ENCODE measurements at regions of chr2 and their contacts with region 1.

Region 1: GRCh38 chr2:31333527-31334183 is 80.9 kb downstream of the XDH start:
- H3K4me3 ChIP-seq: no peak overlapping the region
- H3K27ac ChIP-seq: peak overlapping the region; percentile 7; the same call in 1 of the 2 replicates
- H3K4me1 ChIP-seq: peaks cover 16% of the 10 kb centered on the region
- CTCF ChIP-seq: peak; percentile 71; the same call in 1 of the 2 replicates

Region 2: DNA sequence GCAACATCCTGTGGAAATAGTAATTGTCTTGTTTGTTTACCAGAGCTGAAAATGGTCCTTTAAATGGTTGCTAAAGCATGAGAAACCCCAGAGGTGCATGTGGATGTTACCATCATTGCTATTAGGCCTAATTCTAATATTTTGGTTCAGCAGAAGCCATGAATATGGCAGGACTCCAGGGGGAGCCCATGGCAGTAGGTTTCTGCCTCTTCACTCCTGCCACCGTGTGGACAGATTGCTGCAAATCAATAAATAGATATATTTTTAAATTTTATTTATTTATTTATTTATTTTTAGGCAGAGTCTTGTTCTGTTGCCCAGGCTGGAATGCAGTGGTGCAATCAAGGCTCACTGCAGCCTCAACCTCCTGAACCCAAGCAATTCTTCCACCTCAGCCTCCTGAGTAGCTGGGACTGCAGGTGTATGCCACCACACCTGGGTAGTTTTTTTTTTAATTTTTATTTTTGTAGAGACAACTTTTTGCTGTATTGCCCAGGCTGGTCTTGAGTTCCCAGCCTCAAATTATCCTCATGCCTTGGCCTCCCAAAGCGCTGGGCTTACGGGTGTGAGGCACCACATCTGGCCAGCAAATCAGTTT is 471.5 kb before region 1 on chr2:
- CTCF ChIA-PET with region 1: interaction called, 35 read pairs
- POLR2A ChIA-PET with region 1: no interaction called
- H3K4me3 ChIP-seq: no peak overlapping the region
- H3K27ac ChIP-seq: no peak overlapping the region
- H3K4me1 ChIP-seq: no peaks in the 10 kb centered on the region; the same call in 1 of the 2 replicates
- CTCF ChIP-seq: no peak; the same call in 1 of the 2 replicates

Region 3: DNA sequence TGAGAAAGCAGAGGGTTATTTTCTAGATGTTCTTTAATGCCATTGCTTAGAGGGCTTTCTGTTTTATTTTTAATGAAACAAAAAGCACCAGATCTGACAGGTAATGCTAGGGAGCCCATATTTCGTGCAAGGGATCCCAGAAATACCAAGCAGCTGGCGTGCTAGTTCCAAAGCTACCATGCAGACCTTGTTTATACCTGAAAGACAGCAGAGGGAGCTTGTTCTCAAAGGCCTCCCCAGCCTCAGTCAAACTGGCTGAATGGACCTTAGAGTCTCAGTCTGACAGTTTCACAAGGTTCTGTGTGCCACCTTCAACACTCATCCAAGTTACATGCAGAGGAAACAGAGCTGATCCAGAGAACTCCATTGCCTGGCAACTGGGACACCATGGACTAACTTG is 244.0 kb before region 1 on chr2:
- CTCF ChIA-PET with region 1: no interaction called
- POLR2A ChIA-PET with region 1: no interaction called
- H3K4me3 ChIP-seq: no peak overlapping the region
- H3K27ac ChIP-seq: no peak overlapping the region
- H3K4me1 ChIP-seq: no peaks in the 10 kb centered on the region
- CTCF ChIP-seq: no peak

Region 4: DNA sequence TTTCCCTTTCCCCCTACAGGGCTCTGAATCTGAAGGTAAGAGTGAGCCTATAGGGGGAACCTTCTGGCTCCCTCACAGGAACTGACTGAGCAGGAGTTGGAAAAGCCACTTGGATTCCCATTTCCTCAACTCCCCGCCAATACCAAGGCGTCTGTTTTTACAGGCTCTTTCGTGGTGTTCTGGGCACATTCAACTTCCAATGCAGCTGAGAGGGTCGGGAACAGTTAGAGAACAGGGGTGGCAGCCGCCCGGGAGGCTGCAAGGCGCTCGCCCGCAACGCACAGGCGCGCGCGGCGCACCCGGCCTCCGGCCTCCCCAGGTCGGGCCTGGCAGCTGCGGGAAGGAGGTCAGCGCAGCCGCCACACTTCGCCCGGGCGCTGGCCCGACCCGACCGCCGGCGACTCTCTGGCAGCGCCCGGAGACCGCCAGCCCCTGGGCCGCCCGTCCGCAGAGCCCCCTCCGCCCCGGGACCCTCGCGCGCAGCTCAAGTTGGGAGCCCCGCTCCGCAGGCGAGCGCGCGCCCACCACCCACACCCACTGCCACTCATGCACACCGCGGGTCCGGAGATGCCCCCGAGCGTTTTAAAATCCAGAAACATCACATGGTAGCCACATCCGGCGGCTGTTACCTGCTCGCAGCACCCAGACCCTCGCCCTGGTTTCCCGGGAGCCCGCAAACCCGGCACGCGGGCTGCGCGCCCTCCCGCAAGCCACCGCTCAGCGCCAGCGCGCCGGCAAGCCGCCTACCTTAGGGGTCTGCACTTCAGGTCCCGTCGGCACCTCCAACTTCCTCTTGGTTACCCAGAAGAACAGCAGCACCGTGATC is 196.2 kb before region 1 on chr2:
- CTCF ChIA-PET with region 1: no interaction called
- POLR2A ChIA-PET with region 1: no interaction called
- H3K4me3 ChIP-seq: peak overlapping the region; percentile 48
- H3K27ac ChIP-seq: peak overlapping the region; percentile 61; the same call in 1 of the 2 replicates
- H3K4me1 ChIP-seq: no peaks in the 10 kb centered on the region
- CTCF ChIP-seq: no peak

Region 5: GRCh38 chr2:31170071-31170698 is 163.5 kb before region 1 on chr2:
- CTCF ChIA-PET with region 1: interaction called, 24 read pairs
- POLR2A ChIA-PET with region 1: no interaction called
- H3K4me3 ChIP-seq: no peak overlapping the region
- H3K27ac ChIP-seq: no peak overlapping the region
- H3K4me1 ChIP-seq: no peaks in the 10 kb centered on the region
- CTCF ChIP-seq: peak; percentile 69

Region 6: DNA sequence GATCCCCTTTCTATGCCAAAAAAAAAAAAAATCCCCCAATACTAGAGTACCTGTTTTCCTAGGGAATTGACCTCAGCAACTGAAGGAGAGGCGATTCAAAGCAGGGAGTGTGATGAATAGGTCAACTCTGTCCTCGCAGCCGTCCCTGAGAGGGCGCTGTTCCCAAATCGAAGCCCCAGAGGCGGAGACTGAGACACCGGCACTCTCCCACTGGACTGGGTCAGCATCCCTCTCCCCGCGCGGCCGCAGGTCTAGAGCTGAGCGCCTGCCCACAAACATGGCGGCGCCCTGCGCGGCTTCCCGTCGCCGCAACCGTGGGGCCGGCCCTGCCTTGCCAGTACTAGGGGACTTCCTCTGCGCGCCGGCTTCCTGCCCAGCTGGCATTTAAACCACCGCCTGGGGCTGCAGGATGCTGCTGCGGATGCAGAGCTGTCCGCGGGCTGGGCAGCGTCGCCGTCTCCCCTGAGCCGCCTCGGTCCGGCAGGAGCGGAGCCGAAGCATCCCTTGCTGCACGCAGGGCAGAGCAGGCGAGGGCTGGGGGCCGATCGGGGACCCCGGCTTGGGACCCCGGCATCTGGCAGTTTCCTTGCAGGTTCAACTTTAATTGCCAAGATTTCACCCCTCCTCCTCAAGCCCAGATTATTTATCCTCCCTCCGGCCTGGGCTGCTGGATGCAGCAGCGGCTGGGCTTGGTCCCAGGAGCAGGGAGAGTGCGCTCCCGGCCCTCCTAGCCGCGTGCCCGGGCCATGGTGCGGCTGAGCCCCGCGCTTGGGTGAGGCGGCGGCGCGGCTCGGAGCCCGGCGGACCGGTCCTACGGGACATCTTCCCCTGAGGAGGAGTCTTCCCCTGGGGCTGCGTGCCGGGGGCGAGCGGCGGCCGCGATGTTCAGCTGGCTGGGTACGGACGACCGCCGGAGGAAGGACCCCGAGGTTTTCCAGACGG is 99.6 kb before region 1 on chr2 and contains the start of gene EHD3:
- CTCF ChIA-PET with region 1: interaction called, 25 read pairs
- POLR2A ChIA-PET with region 1: no interaction called
- H3K4me3 ChIP-seq: peak within 1 kb of the TSS; percentile 68
- H3K27ac ChIP-seq: no peak within 1 kb of the TSS; the same call in 1 of the 2 replicates
- H3K4me1 ChIP-seq: 0 out of 2 replicates have a peak, but pooled peaks cover 2% of the 10 kb centered on the region
- CTCF ChIP-seq: peak; percentile 86

Region 7: DNA sequence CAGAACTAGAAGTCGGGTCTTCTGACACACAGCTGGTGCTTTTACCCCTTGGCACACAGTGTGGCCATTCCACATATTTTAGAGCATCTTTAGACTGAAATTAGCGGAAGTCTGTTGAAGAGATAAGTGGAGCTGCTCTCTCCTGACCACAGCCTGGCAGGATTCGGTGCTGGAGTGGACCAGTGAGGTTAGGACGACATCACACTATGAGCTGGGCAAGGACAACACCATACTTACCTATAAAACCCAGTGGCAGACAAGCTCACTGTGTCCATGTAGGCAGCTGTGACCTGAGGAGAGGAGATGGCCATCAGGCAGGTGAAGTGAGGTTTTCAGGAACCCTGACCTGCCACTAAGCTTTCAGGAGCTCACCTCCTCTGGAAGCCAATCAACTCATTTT is 10.8 kb after region 1 on chr2:
- CTCF ChIA-PET with region 1: interaction called, 12 read pairs
- POLR2A ChIA-PET with region 1: no interaction called
- H3K4me3 ChIP-seq: no peak overlapping the region
- H3K27ac ChIP-seq: no peak overlapping the region
- H3K4me1 ChIP-seq: no peaks in the 10 kb centered on the region
- CTCF ChIP-seq: no peak

Region 8: GRCh38 chr2:31440764-31441163 is 107.1 kb after region 1 on chr2:
- CTCF ChIA-PET with region 1: no interaction called
- POLR2A ChIA-PET with region 1: no interaction called
- H3K4me3 ChIP-seq: no peak overlapping the region
- H3K27ac ChIP-seq: no peak overlapping the region
- H3K4me1 ChIP-seq: no peaks in the 10 kb centered on the region
- CTCF ChIP-seq: no peak

Region 9: GRCh38 chr2:31778153-31778552 is 444.5 kb after region 1 on chr2:
- CTCF ChIA-PET with region 1: no interaction called
- POLR2A ChIA-PET with region 1: no interaction called
- H3K4me3 ChIP-seq: no peak overlapping the region
- H3K27ac ChIP-seq: no peak overlapping the region
- H3K4me1 ChIP-seq: no peaks in the 10 kb centered on the region
- CTCF ChIP-seq: no peak